Tibial artery (tissue), 4 donors: ENCODE measurements at regions of chr7 and their contacts with region 1.

Region 1: GRCh38 chr7:15326044-15326644 is 235.7 kb downstream of the AGMO start:
- DNase-seq: no peak
- H3K4me3 ChIP-seq: no peak overlapping the region
- H3K27ac ChIP-seq: no peak overlapping the region
- H3K4me1 ChIP-seq: no peaks in the 10 kb centered on the region
- H3K27me3 ChIP-seq: no peaks in the 10 kb centered on the region
- CTCF ChIP-seq: peak; percentile 36 to 43

Region 2: GRCh38 chr7:15461576-15461975 is 135.4 kb after region 1 on chr7:
- intact Hi-C with region 1: no loop called
- DNase-seq: no peak
- H3K4me3 ChIP-seq: no peak overlapping the region
- H3K27ac ChIP-seq: peak overlapping the region; percentile 18 to 48
- H3K4me1 ChIP-seq: peaks cover 0 to 61% (median 11%) of the 10 kb centered on the region in 4 donors
- H3K27me3 ChIP-seq: no peaks in the 10 kb centered on the region
- CTCF ChIP-seq: no peak

Region 3: DNA sequence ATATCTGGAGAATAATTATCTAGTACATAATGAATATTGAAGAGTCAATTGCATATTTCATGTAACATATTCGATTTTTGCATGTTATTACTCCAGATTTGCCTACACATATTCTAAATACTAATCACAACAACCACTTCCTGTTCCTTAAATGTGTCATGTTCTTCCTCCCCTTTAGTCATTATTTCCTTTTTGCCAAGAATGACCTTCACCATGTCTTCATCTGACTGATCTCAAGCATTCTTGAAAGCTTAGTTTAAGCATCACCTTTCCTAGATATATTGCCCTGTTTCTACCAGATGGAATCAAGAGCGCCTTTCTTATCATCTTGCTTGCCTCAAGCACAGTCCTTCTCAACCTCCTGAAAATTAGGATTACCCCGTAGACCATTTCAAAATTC is 383.8 kb after region 1 on chr7:
- intact Hi-C with region 1: loop called (anchors 10 kb)
- DNase-seq: no peak
- H3K4me3 ChIP-seq: no peak overlapping the region
- H3K27ac ChIP-seq: no peak overlapping the region
- H3K4me1 ChIP-seq: no peaks in the 10 kb centered on the region
- H3K27me3 ChIP-seq: no peaks in the 10 kb centered on the region
- CTCF ChIP-seq: no peak